Activated T-helper 1 cell treated with anti-CD3 and anti-CD28 coated beads, Interleukin-12 subunit alpha, Interleukin-12 subunit beta, Interleukin-2, Interleukin-4 antibody, amounts not matched to agents 30 ng/mL and 10 ng/mL and 1 ng/mL, durations not matched to agents 14 hours and 24 hours and 36 hours (primary cell): ENCODE measurements at regions of chr12 and their contacts with region 1.

Region 1: GRCh38 chr12:21169878-21170472 is 39.0 kb downstream of the SLCO1B1 start:
- DNase-seq: no peak
- H3K4me3 Mint-ChIP-seq: no peak overlapping the region
- H3K27ac Mint-ChIP-seq: no peak overlapping the region
- H3K4me1 Mint-ChIP-seq: no peaks in the 10 kb centered on the region
- H3K27me3 Mint-ChIP-seq: no peaks in the 10 kb centered on the region

Region 2: DNA sequence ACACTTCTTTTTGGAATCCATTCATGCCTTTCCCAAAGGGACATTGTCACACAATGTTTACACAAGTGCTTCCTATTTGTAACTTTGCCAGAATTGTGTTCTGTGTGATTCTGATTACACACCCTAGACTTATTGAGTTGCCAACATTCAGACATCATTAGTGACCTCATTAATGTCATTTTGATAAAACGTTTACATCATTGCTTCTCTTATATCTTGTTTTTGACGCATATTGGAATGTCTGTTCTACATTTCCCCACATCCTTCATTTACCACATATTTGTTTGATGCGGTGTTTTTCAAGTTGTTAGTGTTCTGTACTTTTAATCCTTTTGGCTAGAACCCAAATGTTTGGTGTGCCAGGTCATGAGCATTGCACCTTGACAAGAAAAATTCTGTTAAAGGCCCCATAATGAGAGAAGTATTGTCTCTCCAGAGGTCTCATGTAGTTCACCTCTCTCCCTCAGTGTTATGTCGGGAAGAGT is 1425.2 kb before region 1 on chr12:
- intact Hi-C with region 1: loop called (anchors 10 kb)
- DNase-seq: no peak
- H3K4me3 Mint-ChIP-seq: no peak overlapping the region
- H3K27ac Mint-ChIP-seq: no peak overlapping the region
- H3K4me1 Mint-ChIP-seq: no peaks in the 10 kb centered on the region
- H3K27me3 Mint-ChIP-seq: peaks cover 21% of the 10 kb centered on the region

Region 3: DNA sequence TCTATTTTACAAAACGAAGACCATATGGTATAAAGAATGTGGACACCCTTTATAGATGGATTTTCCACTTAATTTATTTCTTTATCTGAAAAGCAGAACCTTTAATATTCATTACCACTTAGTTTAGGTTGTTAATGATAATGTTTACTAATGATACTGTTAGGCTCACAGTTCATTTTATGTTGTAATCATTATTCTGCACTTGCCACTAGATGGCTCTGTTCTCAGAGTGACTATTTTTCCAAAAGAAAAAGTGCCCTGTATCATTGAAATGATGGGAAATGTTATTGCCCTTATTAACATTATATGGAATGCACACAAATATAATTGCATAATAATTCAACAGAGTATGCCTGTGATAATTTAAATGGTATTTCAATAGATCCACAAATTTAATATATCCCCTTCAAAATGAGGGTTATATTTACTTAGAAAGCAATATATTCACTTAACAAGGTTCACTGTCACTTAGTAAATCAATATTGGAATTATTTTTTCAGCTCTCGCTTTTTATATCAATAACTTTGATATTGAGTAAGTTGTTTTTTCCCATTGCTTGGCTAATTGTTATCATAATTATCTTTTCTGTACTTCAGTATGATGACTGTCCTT is 706.0 kb before region 1 on chr12:
- intact Hi-C with region 1: loop called (anchors 5 kb)
- DNase-seq: no peak
- H3K4me3 Mint-ChIP-seq: no peak overlapping the region
- H3K27ac Mint-ChIP-seq: no peak overlapping the region
- H3K4me1 Mint-ChIP-seq: no peaks in the 10 kb centered on the region
- H3K27me3 Mint-ChIP-seq: no peaks in the 10 kb centered on the region

Region 4: DNA sequence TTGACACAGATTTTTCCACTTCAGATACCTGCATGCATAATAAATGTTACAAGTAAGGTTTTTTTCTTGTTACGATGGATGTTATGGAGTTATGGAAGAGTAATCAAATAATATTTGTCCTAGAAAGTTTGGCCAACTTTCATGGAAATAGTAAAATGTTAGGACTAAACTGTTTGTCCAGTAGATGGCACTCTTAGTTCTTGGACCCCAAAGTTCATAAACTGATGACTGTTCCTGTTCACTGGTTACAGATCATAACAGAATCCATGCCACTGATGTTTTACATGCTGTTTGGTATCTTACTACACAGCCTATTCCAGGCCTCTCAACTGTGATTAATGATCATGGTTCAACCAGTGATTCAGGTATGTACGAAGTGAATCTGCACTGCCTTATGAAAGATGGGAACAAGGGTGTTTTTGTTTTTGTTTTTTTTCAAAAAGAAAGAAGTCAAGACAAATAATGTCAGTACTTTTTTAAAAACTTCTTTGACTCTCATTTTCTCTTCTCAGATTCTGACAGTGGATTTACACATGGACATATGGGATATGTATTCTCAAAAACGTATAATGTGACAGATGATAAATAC is 523.6 kb before region 1 on chr12:
- intact Hi-C with region 1: loop called (anchors 2 kb)
- DNase-seq: no peak
- H3K4me3 Mint-ChIP-seq: no peak overlapping the region
- H3K27ac Mint-ChIP-seq: no peak overlapping the region
- H3K4me1 Mint-ChIP-seq: no peaks in the 10 kb centered on the region
- H3K27me3 Mint-ChIP-seq: no peaks in the 10 kb centered on the region

Region 5: GRCh38 chr12:20950248-20950647 is 219.7 kb before region 1 on chr12:
- intact Hi-C with region 1: loop called (anchors 1 kb)
- DNase-seq: no peak
- H3K4me3 Mint-ChIP-seq: no peak overlapping the region
- H3K27ac Mint-ChIP-seq: no peak overlapping the region
- H3K4me1 Mint-ChIP-seq: no peaks in the 10 kb centered on the region
- H3K27me3 Mint-ChIP-seq: no peaks in the 10 kb centered on the region

Region 6: DNA sequence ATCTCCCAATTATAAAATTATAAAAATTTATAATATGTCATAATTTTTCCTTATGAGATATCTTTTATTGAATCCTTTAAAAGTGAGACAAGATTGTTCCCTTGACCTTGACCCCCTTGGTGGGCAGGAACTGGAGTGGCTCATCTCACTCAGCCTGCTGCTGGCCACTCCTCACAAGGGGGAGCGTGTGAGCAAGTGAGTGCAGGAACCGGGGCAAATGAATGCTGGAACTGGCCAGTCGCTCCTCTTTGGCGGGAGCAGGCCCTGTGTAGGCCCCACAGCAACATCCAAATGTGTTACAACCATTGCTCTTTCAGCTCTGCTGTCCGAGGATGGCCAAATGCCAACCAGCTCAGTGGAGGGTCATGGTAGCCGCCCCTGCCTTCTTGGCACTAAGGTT is 1633.8 kb after region 1 on chr12:
- intact Hi-C with region 1: no loop called
- DNase-seq: no peak
- H3K4me3 Mint-ChIP-seq: no peak overlapping the region
- H3K27ac Mint-ChIP-seq: no peak overlapping the region
- H3K4me1 Mint-ChIP-seq: no peaks in the 10 kb centered on the region
- H3K27me3 Mint-ChIP-seq: peaks cover 6% of the 10 kb centered on the region